ENCODE measurements at regions of chr3 and their contacts with region 1.

Region 1: DNA sequence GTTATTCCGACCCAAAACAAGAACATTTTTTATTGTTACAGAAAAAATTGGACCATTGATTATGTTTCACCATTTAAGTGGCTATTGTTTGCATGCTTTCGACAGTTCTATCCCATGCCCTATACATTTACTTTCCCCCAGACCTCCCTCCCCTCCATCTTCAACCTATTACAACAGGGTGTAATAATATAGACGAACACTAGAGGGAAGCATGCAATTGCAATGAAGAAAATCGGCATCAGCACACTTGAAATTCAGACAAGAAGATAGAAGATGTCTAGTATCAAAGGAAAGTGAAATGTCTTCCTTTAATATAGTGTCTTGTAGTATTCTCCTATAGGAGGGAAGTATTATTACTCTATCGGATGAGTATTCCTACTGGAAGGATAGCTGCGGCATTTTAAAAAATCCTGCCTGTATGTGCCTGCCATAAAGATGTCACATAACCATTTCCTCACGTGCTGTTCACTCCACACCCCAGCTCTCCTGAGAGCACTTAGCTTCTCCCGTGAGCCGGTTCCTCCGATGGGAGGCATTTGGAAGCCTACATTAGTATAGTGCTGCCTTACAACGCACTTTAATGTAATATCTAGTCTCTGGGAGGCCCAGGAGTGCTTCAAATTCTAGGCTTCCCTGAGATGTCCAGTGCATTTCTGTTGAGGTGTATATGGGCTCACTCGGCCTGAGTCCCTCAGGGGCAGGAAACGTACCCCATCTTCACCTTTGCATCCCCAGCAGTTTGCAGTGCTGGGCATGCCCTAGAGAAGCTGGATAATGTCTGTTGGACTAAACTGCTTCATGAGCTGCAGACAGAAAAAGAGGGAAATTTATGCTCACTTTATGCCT is 17.8 kb upstream of the ERICH6 start:
- DNase-seq: no peak
- ATAC-seq: peak; percentile 71
- H3K4me3 ChIP-seq: no peak overlapping the region
- H3K27ac ChIP-seq: no peak overlapping the region
- H3K4me1 ChIP-seq: no peaks in the 10 kb centered on the region
- H3K27me3 ChIP-seq: no peaks in the 10 kb centered on the region
- CTCF ChIP-seq: peak; percentile 37 to 92 (median 86)
- POLR2A ChIP-seq: no peak

Region 2: GRCh38 chr3:150365132-150365604 is 356.3 kb before region 1 on chr3:
- intact Hi-C with region 1: no loop called
- DNase-seq: no peak
- ATAC-seq: no peak
- H3K4me3 ChIP-seq: no peak overlapping the region
- H3K27ac ChIP-seq: no peak overlapping the region
- H3K4me1 ChIP-seq: no peaks in the 10 kb centered on the region
- H3K27me3 ChIP-seq: no peaks in the 10 kb centered on the region
- CTCF ChIP-seq: no peak
- POLR2A ChIP-seq: no peak

Region 3: GRCh38 chr3:150577859-150578258 is 143.6 kb before region 1 on chr3:
- intact Hi-C with region 1: no loop called
- DNase-seq: no peak
- ATAC-seq: no peak
- H3K4me3 ChIP-seq: no peak overlapping the region
- H3K27ac ChIP-seq: no peak overlapping the region
- H3K4me1 ChIP-seq: no peaks in the 10 kb centered on the region
- H3K27me3 ChIP-seq: no peaks in the 10 kb centered on the region
- CTCF ChIP-seq: no peak
- POLR2A ChIP-seq: no peak

Region 4: GRCh38 chr3:150840802-150841515 is 119.5 kb after region 1 on chr3:
- intact Hi-C with region 1: no loop called
- DNase-seq: no peak
- ATAC-seq: no peak
- H3K4me3 ChIP-seq: no peak overlapping the region
- H3K27ac ChIP-seq: no peak overlapping the region
- H3K4me1 ChIP-seq: no peaks in the 10 kb centered on the region
- H3K27me3 ChIP-seq: no peaks in the 10 kb centered on the region
- CTCF ChIP-seq: peak in 1 of 7 experiments; percentile 6
- POLR2A ChIP-seq: no peak

Region 5: DNA sequence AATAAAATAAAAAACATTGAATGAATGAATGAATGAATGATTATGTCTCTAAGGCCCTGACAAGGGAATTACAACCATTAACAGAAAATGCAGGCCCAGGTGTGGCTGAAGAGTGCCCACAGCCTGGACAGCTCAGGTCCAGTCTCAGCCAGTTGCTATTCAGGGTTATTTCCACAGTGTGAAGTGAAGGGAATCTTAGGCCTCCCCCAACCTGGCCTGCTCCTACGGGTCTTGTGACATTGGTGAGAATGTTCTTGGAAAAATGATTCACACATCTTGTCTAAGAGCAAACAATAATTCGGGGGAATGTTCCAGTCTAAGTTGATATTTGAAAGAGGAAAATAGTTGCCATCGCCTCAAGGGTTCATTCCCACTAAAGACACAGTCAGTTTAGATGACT is 146.8 kb after region 1 on chr3:
- intact Hi-C with region 1: loop called (anchors 5 kb)
- DNase-seq: no peak
- ATAC-seq: no peak
- H3K4me3 ChIP-seq: no peak overlapping the region
- H3K27ac ChIP-seq: no peak overlapping the region
- H3K4me1 ChIP-seq: peaks cover 7% of the 10 kb centered on the region
- H3K27me3 ChIP-seq: no peaks in the 10 kb centered on the region
- CTCF ChIP-seq: no peak
- POLR2A ChIP-seq: no peak

Measured in body of pancreas (tissue), 4 donors.